ENCODE measurements at regions of chr14 and their contacts with region 1.

Region 1: DNA sequence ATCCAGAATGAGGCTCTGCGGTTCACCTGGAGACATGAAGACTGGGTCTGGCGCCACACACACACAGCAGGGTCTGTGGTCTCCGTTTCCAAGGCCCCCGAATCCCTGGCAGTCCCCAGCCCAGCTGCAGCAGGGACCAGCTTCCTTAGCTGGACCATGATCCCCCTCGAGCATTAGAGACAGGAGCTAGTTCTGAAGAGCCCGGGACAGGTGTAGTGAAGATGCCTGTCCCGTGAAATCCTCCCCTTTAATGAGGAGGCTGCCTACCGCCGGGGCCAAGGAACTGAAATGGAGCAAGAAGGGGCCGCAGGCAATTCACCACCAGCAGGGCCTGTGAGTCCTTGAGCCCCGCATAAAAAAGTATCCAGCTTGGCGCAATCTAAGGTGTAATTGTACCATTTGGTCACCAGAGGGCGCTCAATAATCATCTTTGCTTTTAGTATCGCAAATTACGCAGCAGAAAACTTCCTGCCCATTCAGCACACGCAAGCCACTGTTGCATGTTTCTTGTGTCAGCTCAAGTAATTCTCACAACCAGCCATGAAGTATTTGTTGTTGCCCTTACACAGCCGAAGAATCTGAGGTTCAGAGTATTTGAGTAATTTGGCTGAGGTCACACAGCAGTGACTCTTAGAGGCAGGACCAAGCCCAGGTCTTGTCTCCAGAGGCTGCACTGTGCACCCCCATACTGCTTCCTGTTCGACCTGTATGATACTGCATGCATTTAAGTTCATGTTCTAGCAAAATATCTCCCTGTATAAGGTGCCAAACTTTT is 54.3 kb upstream of the PPP2R5C start:
- DNase-seq: peak in 13 of 14 experiments; percentile 39 to 93 (median 55)
- ATAC-seq: peak; percentile 64
- H3K4me3 ChIP-seq: peak overlapping the region; percentile 17
- H3K4me3 Mint-ChIP-seq: peak overlapping the region; percentile 30
- H3K27ac ChIP-seq: peak overlapping the region in 1 of 2 donors; percentile 62
- H3K27ac Mint-ChIP-seq: peak overlapping the region; percentile 77
- H3K4me1 ChIP-seq: peaks cover 52% of the 10 kb centered on the region
- H3K4me1 Mint-ChIP-seq: peaks cover 44% of the 10 kb centered on the region
- H3K27me3 ChIP-seq: no peaks in the 10 kb centered on the region
- H3K27me3 Mint-ChIP-seq: no peaks in the 10 kb centered on the region
- CTCF ChIP-seq: peak; percentile 87

Region 2: GRCh38 chr14:101721951-101722661 is 14.9 kb after region 1 on chr14:
- CTCF ChIA-PET with region 1: interaction called, 23 read pairs
- POLR2A ChIA-PET with region 1: interaction called, 79 read pairs
- intact Hi-C with region 1: loop called (anchors 1 to 2 kb)
- DNase-seq: peak; percentile 65 to 95 (median 77)
- ATAC-seq: peak; percentile 77
- H3K4me3 ChIP-seq: peak overlapping the region; percentile 31
- H3K4me3 Mint-ChIP-seq: peak overlapping the region; percentile 70
- H3K27ac ChIP-seq: peak overlapping the region; percentile 84 to 87
- H3K27ac Mint-ChIP-seq: peak overlapping the region; percentile 95
- H3K4me1 ChIP-seq: peaks cover 61% of the 10 kb centered on the region
- H3K4me1 Mint-ChIP-seq: peaks cover 61% of the 10 kb centered on the region
- H3K27me3 ChIP-seq: no peaks in the 10 kb centered on the region
- H3K27me3 Mint-ChIP-seq: no peaks in the 10 kb centered on the region
- CTCF ChIP-seq: no peak

Region 3: DNA sequence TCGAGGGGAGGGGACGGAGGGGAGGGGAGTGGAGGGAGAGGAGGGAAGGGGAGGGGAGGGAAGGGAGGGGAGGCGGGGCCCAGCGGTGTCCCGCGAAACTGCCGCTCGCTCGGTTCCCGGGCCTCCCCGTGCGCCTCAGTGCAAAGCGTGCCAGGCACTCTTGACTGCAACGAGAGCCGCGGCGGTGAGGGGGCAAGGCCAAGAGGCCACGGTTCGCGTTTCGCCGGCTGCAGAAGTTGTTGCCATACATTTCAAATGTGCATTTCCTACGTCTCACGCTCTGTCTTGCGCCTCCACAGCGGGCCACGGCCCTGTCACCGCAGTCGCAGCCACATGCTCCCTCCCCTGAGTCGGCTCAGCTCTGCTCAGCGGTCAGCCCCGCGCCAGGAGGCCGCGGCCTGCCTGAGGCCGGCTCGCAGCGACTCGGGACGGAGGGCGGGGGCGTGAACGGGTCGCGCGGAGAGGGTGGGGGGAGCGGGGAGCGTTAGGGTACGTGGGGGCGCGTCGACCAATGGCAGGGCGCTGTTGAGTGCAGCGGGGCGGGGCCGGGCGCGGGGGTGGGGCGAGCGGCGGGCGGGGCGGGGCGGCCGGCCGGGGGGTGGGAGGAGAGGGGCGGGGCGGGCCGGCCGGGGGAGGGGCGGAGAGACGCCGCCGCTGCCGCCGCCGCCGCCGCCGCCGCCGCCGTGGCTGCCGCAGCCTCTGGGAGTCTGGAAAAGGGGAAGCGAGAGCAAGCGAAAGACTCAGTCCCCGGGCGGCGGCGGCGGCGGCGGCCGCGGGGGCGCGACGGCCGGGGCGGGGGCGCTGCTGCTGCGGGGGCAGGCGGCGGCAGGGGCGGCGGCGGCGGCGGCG is 54.0 kb after region 1 on chr14 and contains the start of gene PPP2R5C:
- CTCF ChIA-PET with region 1: interaction called, 14 read pairs
- POLR2A ChIA-PET with region 1: interaction called, 78 read pairs
- intact Hi-C with region 1: loop called (anchors 1 kb)
- DNase-seq: peak; percentile 78 to 94 (median 86)
- ATAC-seq: peak; percentile 60
- H3K4me3 ChIP-seq: peak within 1 kb of the TSS; percentile 97
- H3K4me3 Mint-ChIP-seq: peak within 1 kb of the TSS; percentile 97
- H3K27ac ChIP-seq: peak within 1 kb of the TSS; percentile 79
- H3K27ac Mint-ChIP-seq: peak within 1 kb of the TSS; percentile 91
- H3K4me1 ChIP-seq: peaks cover 30% of the 10 kb centered on the region
- H3K4me1 Mint-ChIP-seq: peaks cover 43% of the 10 kb centered on the region
- H3K27me3 ChIP-seq: no peaks in the 10 kb centered on the region
- H3K27me3 Mint-ChIP-seq: no peaks in the 10 kb centered on the region
- CTCF ChIP-seq: no peak
- total RNA-seq, gene PPP2R5C: 463 to 487 TPM

Region 4: DNA sequence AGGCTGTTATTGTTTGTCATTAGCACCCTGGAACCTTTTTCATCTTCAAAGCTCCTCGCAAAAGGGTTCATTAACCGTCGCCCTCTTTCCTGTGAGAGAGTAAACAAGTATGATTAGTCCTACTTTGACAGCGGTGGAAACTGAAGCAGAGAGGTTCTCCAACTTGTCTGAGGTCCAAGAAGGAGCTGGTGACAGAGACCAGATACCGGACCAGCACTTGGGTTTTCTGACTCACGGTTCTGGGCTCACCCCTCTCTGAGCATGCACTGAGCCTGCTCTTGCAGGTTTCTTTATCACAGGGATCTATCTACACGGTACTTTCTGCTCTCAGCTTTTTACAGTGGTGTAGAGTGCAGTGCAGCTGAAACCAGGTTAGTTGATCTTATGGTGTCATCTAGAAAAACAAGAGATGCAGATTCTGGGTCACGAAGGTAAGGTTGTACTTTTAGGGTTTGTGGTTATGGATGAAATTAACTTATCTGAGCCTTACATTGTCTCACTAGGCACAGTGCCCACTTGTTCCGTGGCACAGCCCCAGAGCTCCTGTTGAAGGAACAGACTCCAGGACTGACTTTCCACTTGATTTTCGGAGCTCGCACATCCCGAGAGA is 116.4 kb after region 1 on chr14:
- CTCF ChIA-PET with region 1: interaction called, 13 read pairs
- POLR2A ChIA-PET with region 1: interaction called, 51 read pairs
- intact Hi-C with region 1: loop called (anchors 1 to 5 kb)
- DNase-seq: peak; percentile 50 to 91 (median 66)
- ATAC-seq: peak; percentile 61
- H3K4me3 ChIP-seq: peak overlapping the region; percentile 76
- H3K4me3 Mint-ChIP-seq: peak overlapping the region; percentile 90
- H3K27ac ChIP-seq: peak overlapping the region; percentile 98 to 99
- H3K27ac Mint-ChIP-seq: peak overlapping the region; percentile 98
- H3K4me1 ChIP-seq: peaks cover 79% of the 10 kb centered on the region
- H3K4me1 Mint-ChIP-seq: peaks cover 89% of the 10 kb centered on the region
- H3K27me3 ChIP-seq: no peaks in the 10 kb centered on the region
- H3K27me3 Mint-ChIP-seq: no peaks in the 10 kb centered on the region
- CTCF ChIP-seq: no peak

Region 5: DNA sequence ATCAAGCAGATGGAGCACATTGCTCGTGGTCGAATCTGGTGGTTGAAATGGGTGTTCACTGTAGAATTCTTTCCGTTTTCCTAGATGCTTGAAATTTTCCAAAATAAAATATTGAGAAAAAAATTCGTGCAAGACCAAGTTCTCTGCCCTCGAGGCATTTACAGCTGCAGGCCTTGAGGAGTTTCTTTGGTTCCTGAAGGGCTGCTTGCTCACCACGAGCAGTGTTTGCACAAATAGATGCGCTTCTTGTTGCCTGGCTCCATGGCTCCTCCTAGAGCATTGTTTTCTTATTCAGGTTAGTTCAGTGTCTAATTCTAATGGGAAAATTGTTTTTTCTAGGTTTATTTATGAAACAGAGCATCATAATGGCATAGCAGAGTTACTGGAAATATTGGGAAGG is 182.6 kb after region 1 on chr14:
- CTCF ChIA-PET with region 1: interaction called, 3 read pairs
- POLR2A ChIA-PET with region 1: interaction called, 4 read pairs
- intact Hi-C with region 1: loop called (anchors 5 kb)
- DNase-seq: peak in 3 of 14 experiments; percentile 15 to 49 (median 35)
- ATAC-seq: peak; percentile 52
- H3K4me3 ChIP-seq: no peak overlapping the region
- H3K4me3 Mint-ChIP-seq: no peak overlapping the region
- H3K27ac ChIP-seq: no peak overlapping the region
- H3K27ac Mint-ChIP-seq: peak overlapping the region; percentile 31
- H3K4me1 ChIP-seq: no peaks in the 10 kb centered on the region
- H3K4me1 Mint-ChIP-seq: no peaks in the 10 kb centered on the region
- H3K27me3 ChIP-seq: no peaks in the 10 kb centered on the region
- H3K27me3 Mint-ChIP-seq: no peaks in the 10 kb centered on the region
- CTCF ChIP-seq: no peak

Region 6: GRCh38 chr14:101964297-101965144 is 257.3 kb after region 1 on chr14 and contains the start of gene DYNC1H1:
- CTCF ChIA-PET with region 1: no interaction called
- POLR2A ChIA-PET with region 1: interaction called, 12 read pairs
- intact Hi-C with region 1: loop called (anchors 1 kb)
- DNase-seq: peak; percentile 75 to 96 (median 86)
- ATAC-seq: peak; percentile 83
- H3K4me3 ChIP-seq: peak within 1 kb of the TSS; percentile 86
- H3K4me3 Mint-ChIP-seq: peak within 1 kb of the TSS; percentile 93
- H3K27ac ChIP-seq: peak within 1 kb of the TSS; percentile 68 to 82
- H3K27ac Mint-ChIP-seq: peak within 1 kb of the TSS; percentile 85
- H3K4me1 ChIP-seq: peaks cover 44% of the 10 kb centered on the region
- H3K4me1 Mint-ChIP-seq: peaks cover 53% of the 10 kb centered on the region
- H3K27me3 ChIP-seq: no peaks in the 10 kb centered on the region
- H3K27me3 Mint-ChIP-seq: no peaks in the 10 kb centered on the region
- CTCF ChIP-seq: no peak
- total RNA-seq, gene DYNC1H1: 286 to 293 TPM

Region 7: GRCh38 chr14:102316743-102317563 is 609.7 kb after region 1 on chr14:
- CTCF ChIA-PET with region 1: interaction called, 5 read pairs
- POLR2A ChIA-PET with region 1: interaction called, 3 read pairs
- intact Hi-C with region 1: loop called (anchors 5 kb)
- DNase-seq: peak; percentile 85 to 99 (median 96)
- ATAC-seq: peak; percentile 55
- H3K4me3 ChIP-seq: peak overlapping the region; percentile 72
- H3K4me3 Mint-ChIP-seq: peak overlapping the region; percentile 100
- H3K27ac ChIP-seq: peak overlapping the region; percentile 43 to 70
- H3K27ac Mint-ChIP-seq: peak overlapping the region; percentile 100
- H3K4me1 ChIP-seq: peaks cover 66% of the 10 kb centered on the region
- H3K4me1 Mint-ChIP-seq: peaks cover 62% of the 10 kb centered on the region
- H3K27me3 ChIP-seq: no peaks in the 10 kb centered on the region
- H3K27me3 Mint-ChIP-seq: peaks cover 11% of the 10 kb centered on the region
- CTCF ChIP-seq: peak; percentile 79